Pancreas (tissue), 10 donors: ENCODE measurements at regions of chr2 and their contacts with region 1.

Region 1: GRCh38 chr2:100242891-100243619 is 79.2 kb downstream of the LONRF2 start:
- DNase-seq: peak in 5 of 6 donors; percentile 35 to 84 (median 69)
- ATAC-seq: peak; percentile 64 to 96 (median 86)
- H3K4me3 ChIP-seq: no peak overlapping the region
- H3K27ac ChIP-seq: no peak overlapping the region
- H3K4me1 ChIP-seq: no peaks in the 10 kb centered on the region
- H3K27me3 ChIP-seq: no peaks in the 10 kb centered on the region
- CTCF ChIP-seq: peak; percentile 24 to 57 (median 40)

Region 2: GRCh38 chr2:99559075-99559662 is 683.9 kb before region 1 on chr2:
- intact Hi-C with region 1: loop called in 1 of 3 experiments (anchors 5 kb)
- DNase-seq: peak; percentile 62 to 99 (median 85)
- ATAC-seq: peak; percentile 90 to 99 (median 98)
- H3K4me3 ChIP-seq: no peak overlapping the region
- H3K27ac ChIP-seq: no peak overlapping the region
- H3K4me1 ChIP-seq: no peaks in the 10 kb centered on the region
- H3K27me3 ChIP-seq: peaks cover 0 to 8% (median 2%) of the 10 kb centered on the region in 4 donors
- CTCF ChIP-seq: peak; percentile 97 to 99 (median 98)

Region 3: DNA sequence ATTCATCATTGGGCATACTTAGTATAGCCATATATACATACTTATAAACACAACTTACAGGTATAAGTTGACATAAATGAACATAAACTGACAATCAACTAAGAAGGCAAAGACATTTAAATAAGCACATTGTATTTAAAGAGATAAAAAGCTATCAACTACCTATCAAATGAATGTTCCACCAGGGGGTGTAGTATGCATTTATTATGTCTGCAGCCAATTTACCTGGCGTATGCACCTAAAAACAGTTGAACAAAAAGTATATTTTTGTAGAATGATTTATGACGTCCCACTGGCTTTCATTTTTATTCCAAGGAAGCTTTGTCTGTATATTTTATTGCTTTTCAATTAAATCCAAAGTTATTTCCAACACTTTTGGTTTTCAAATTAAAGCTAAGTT is 424.2 kb before region 1 on chr2:
- intact Hi-C with region 1: loop called in 1 of 3 experiments (anchors 5 kb)
- DNase-seq: no peak
- ATAC-seq: no peak
- H3K4me3 ChIP-seq: no peak overlapping the region
- H3K27ac ChIP-seq: no peak overlapping the region
- H3K4me1 ChIP-seq: no peaks in the 10 kb centered on the region
- H3K27me3 ChIP-seq: peaks cover 0 to 5% (median 0%) of the 10 kb centered on the region in 4 donors
- CTCF ChIP-seq: no peak